T-cell (primary cell): ENCODE measurements at regions of chr7 and their contacts with region 1.

Region 1: DNA sequence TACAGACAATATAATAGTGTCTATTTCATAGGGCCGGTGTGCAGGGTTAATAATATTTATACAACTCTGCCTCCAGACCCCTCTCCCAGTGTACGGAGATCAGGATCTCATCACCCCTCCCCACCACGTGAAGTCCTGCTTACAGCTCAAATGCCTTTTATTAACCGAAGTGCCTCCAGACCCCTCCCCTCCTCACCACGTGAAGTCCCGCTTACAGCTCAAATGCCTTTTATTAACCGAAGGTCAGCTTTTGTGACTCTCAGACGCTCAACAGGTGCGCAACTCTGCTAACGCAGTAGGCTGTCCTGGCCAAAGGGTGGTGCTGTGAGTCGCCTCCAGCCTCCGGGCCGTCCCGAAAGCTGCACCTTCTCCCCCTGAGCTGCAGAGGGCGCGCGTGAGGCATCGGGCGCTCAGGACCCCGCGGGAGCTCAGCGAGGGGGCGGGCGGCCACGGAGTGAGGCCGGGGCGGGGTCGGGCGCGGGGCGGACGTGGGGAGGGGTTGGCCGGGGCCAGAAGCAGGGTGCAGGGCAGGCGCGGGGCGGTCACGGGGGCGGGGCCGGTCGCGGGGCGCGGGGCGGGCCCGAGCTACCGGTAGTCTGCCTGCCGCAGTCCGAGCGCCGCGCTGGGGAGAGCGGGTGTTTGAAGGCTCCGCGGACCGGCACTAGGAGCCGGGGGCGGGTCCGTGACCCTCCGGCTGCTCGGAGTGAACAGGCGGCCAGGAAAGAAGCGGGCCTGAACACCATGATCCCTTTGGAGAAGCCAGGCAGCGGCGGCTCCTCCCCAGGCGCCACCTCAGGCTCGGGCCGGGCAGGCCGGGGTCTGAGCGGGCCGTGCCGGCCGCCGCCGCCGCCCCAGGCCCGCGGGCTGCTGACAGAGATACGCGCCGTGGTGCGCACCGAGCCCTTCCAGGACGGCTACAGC is at the start of gene STK17A:
- DNase-seq: peak; percentile 87 to 98 (median 93)
- ATAC-seq: peak; percentile 70 to 87 (median 80)
- H3K4me3 ChIP-seq: peak within 1 kb of the TSS; percentile 94 to 96
- H3K4me3 Mint-ChIP-seq: peak within 1 kb of the TSS; percentile 96 to 99 (median 98)
- H3K27ac ChIP-seq: peak within 1 kb of the TSS; percentile 95
- H3K27ac Mint-ChIP-seq: peak within 1 kb of the TSS; percentile 95 to 98
- H3K4me1 ChIP-seq: peaks cover 4 to 12% of the 10 kb centered on the region in 2 experiments
- H3K4me1 Mint-ChIP-seq: peaks cover 14 to 40% (median 26%) of the 10 kb centered on the region in 3 donors
- H3K27me3 ChIP-seq: no peaks in the 10 kb centered on the region
- H3K27me3 Mint-ChIP-seq: peaks cover 0 to 5% of the 10 kb centered on the region in 2 donors
- total RNA-seq, gene STK17A: 101 to 120 (median 117) TPM

Region 2: GRCh38 chr7:43602271-43602670 is 19.5 kb after region 1 on chr7:
- CTCF ChIA-PET with region 1: interaction called, 5 to 47 read pairs
- POLR2A ChIA-PET with region 1: interaction called, 9 to 10 read pairs
- DNase-seq: no peak
- ATAC-seq: no peak
- H3K4me3 ChIP-seq: no peak overlapping the region
- H3K4me3 Mint-ChIP-seq: no peak overlapping the region
- H3K27ac ChIP-seq: no peak overlapping the region
- H3K27ac Mint-ChIP-seq: no peak overlapping the region
- H3K4me1 ChIP-seq: peaks cover 52 to 53% of the 10 kb centered on the region in 2 experiments
- H3K4me1 Mint-ChIP-seq: peaks cover 49 to 51% (median 50%) of the 10 kb centered on the region in 3 donors
- H3K27me3 ChIP-seq: no peaks in the 10 kb centered on the region
- H3K27me3 Mint-ChIP-seq: no peaks in the 10 kb centered on the region

Region 3: GRCh38 chr7:43630482-43630881 is 47.7 kb after region 1 on chr7:
- CTCF ChIA-PET with region 1: interaction called, 3 to 18 read pairs
- POLR2A ChIA-PET with region 1: interaction called, 9 to 25 read pairs
- DNase-seq: no peak
- ATAC-seq: no peak
- H3K4me3 ChIP-seq: no peak overlapping the region
- H3K4me3 Mint-ChIP-seq: peak overlapping the region in 2 of 3 donors; percentile 10 to 74
- H3K27ac ChIP-seq: peak overlapping the region; percentile 65
- H3K27ac Mint-ChIP-seq: peak overlapping the region; percentile 87 to 96
- H3K4me1 ChIP-seq: peaks cover 56 to 76% of the 10 kb centered on the region in 2 experiments
- H3K4me1 Mint-ChIP-seq: peaks cover 93% of the 10 kb centered on the region in 3 donors
- H3K27me3 ChIP-seq: no peaks in the 10 kb centered on the region
- H3K27me3 Mint-ChIP-seq: no peaks in the 10 kb centered on the region

Region 4: GRCh38 chr7:43679210-43680068 is 96.7 kb after region 1 on chr7:
- CTCF ChIA-PET with region 1: interaction called, 6 to 11 read pairs
- POLR2A ChIA-PET with region 1: interaction called, 7 to 12 read pairs
- DNase-seq: peak in 1 of 35 experiments; percentile 14
- ATAC-seq: peak in 2 of 4 experiments; percentile 32 to 52
- H3K4me3 ChIP-seq: peak overlapping the region in 1 of 2 donors; percentile 44
- H3K4me3 Mint-ChIP-seq: peak overlapping the region in 1 of 3 donors; percentile 33
- H3K27ac ChIP-seq: peak overlapping the region; percentile 8
- H3K27ac Mint-ChIP-seq: peak overlapping the region; percentile 84 to 89
- H3K4me1 ChIP-seq: peaks cover 13 to 29% of the 10 kb centered on the region in 2 experiments
- H3K4me1 Mint-ChIP-seq: peaks cover 74 to 84% (median 83%) of the 10 kb centered on the region in 3 donors
- H3K27me3 ChIP-seq: no peaks in the 10 kb centered on the region
- H3K27me3 Mint-ChIP-seq: no peaks in the 10 kb centered on the region

Region 5: GRCh38 chr7:43729214-43729923 is 146.6 kb after region 1 on chr7 and contains the start of gene COA1:
- CTCF ChIA-PET with region 1: interaction called, 4 to 25 read pairs
- POLR2A ChIA-PET with region 1: interaction called, 8 to 21 read pairs
- DNase-seq: peak; percentile 61 to 91 (median 75)
- ATAC-seq: peak; percentile 94 to 97 (median 96)
- H3K4me3 ChIP-seq: peak within 1 kb of the TSS; percentile 91 to 96
- H3K4me3 Mint-ChIP-seq: peak within 1 kb of the TSS; percentile 90 to 93 (median 91)
- H3K27ac ChIP-seq: peak within 1 kb of the TSS; percentile 58
- H3K27ac Mint-ChIP-seq: peak within 1 kb of the TSS; percentile 86 to 90
- H3K4me1 ChIP-seq: peaks cover 5 to 13% of the 10 kb centered on the region in 2 experiments
- H3K4me1 Mint-ChIP-seq: peaks cover 36 to 45% (median 37%) of the 10 kb centered on the region in 3 donors
- H3K27me3 ChIP-seq: no peaks in the 10 kb centered on the region
- H3K27me3 Mint-ChIP-seq: peaks cover 0 to 2% of the 10 kb centered on the region in 2 donors
- total RNA-seq, gene COA1: 49.6 to 92.1 (median 67.8) TPM

Region 6: DNA sequence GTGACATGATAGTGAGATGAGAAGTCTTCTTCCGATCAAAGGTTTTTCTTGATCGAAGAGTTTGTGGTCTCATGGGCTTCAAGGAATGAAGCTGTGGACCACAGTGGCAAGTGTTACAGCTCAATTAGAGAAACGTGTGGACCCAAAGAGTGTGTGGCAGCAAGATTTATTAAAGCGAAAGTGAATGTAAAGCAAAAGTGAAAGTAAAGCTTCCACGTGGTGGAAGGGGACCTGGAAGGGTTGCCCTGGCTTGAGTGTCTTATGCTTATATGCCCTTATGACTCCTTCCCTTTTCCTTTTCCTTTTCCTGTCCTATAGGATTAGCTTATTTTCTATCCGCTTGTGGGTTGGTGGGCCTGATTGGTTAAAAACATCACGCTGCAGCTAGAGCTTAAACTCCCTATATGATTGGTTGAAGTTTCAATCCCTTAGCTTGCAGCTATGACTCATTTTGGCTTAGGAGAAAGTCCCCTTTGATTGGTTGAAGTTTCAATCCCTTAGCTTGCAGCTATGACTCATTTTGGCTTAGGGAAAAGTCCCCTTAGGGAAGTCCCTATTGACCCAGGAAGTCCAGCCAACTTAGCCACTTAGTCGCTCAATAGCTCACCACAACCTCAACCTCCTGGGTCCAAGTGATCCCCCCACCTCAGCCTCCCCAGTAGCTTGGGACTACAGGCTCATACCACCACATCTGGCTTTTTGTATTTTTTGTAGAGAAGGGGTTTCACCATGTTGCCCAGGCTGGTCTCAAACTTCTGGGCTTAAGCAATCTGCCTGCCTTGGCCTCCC is 251.9 kb after region 1 on chr7:
- CTCF ChIA-PET with region 1: interaction called, 17 to 74 read pairs
- POLR2A ChIA-PET with region 1: interaction called, 9 to 16 read pairs
- DNase-seq: peak in 21 of 35 experiments; percentile 2 to 76 (median 10)
- ATAC-seq: peak; percentile 36 to 54 (median 50)
- H3K4me3 ChIP-seq: peak overlapping the region; percentile 25 to 66
- H3K4me3 Mint-ChIP-seq: peak overlapping the region; percentile 71 to 88 (median 83)
- H3K27ac ChIP-seq: peak overlapping the region; percentile 87
- H3K27ac Mint-ChIP-seq: peak overlapping the region; percentile 93 to 96
- H3K4me1 ChIP-seq: peaks cover 3 to 20% of the 10 kb centered on the region in 2 experiments
- H3K4me1 Mint-ChIP-seq: peaks cover 19 to 24% (median 22%) of the 10 kb centered on the region in 3 donors
- H3K27me3 ChIP-seq: peaks cover 0 to 4% of the 10 kb centered on the region in 2 experiments
- H3K27me3 Mint-ChIP-seq: peaks cover under 1 to 4% of the 10 kb centered on the region in 2 donors